ENCODE measurements at regions of chrX and their contacts with region 1.

Region 1: DNA sequence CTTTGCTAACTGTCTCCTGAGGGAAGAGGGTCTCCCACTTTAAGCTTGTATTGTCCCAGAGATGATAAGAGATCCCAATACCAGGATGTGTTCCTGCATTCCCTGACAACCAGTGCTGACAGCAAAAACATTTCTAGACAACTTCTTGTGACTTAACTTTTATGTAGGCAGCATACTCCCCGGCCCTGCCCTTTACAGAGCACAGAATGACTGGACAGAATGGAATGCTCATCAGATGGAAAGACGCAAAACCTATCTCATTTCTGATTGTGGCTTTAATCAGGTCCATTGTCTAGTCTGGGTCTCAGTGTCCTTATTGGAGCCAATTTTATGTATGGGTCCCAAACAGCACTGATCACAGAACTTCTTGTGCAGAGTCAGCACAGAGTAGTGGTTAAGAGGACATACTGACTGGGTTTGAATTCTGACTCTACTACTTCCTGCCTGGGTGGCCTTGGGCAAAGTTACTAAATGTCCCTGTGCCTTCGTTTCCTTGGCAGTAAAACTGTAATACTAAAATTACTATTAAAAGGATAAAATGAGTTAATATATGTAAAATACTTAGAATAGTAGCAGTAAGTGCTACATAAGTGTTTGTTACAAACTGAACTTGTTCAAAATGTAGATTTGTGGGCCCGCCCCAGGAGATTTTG is 18.3 kb upstream of the PLAC1 start:
- DNase-seq: no peak
- H3K4me3 ChIP-seq: no peak overlapping the region
- CTCF ChIP-seq: no peak

Region 2: DNA sequence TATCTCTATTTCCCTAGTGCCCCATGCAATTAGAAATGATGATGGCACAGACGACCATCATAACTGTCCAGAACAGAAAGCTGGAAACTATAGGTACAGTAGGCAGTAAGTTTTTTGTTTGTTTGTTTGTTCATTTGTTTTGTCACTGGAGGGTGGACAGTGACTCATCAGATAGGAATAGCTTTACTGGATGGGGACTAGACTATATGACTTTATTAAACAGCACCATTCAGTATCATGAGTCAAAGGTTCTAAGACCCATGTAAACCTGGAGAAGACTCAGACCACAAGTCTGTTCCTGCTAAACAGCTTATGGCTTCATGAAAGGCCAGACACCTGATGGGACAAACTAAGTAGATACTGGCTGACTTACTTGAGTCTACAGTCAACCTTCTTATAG is 56.7 kb before region 1 on chrX:
- in situ Hi-C with region 1: loop called (anchors 5 kb)
- DNase-seq: no peak
- H3K4me3 ChIP-seq: no peak overlapping the region
- CTCF ChIP-seq: no peak

Region 3: GRCh38 chrX:135625995-135626394 is 949.4 kb after region 1 on chrX:
- in situ Hi-C with region 1: no loop called
- DNase-seq: no peak
- H3K4me3 ChIP-seq: no peak overlapping the region
- CTCF ChIP-seq: no peak